AG04449 (cell line): ENCODE measurements at regions of chr15 and their contacts with region 1.

Region 1: GRCh38 chr15:42920519-42921227 is at the start of gene TTBK2:
- DNase-seq: peak; percentile 87
- H3K4me3 ChIP-seq: peak within 1 kb of the TSS; percentile 75
- CTCF ChIP-seq: peak; percentile 18

Region 2: GRCh38 chr15:42704492-42704926 is 216.2 kb before region 1 on chr15:
- CTCF ChIA-PET with region 1: interaction called, 147 read pairs
- POLR2A ChIA-PET with region 1: no interaction called
- DNase-seq: no peak
- H3K4me3 ChIP-seq: no peak overlapping the region
- CTCF ChIP-seq: peak; percentile 89

Region 3: GRCh38 chr15:42710662-42711061 is 210.0 kb before region 1 on chr15:
- CTCF ChIA-PET with region 1: interaction called, 147 read pairs
- POLR2A ChIA-PET with region 1: no interaction called
- DNase-seq: no peak
- H3K4me3 ChIP-seq: no peak overlapping the region
- CTCF ChIP-seq: no peak

Region 4: GRCh38 chr15:42727750-42728381 is 192.8 kb before region 1 on chr15:
- CTCF ChIA-PET with region 1: interaction called, 12 read pairs
- POLR2A ChIA-PET with region 1: no interaction called
- DNase-seq: no peak
- H3K4me3 ChIP-seq: no peak overlapping the region
- CTCF ChIP-seq: no peak

Region 5: GRCh38 chr15:42736793-42737528 is 183.7 kb before region 1 on chr15 and contains the start of gene CDAN1:
- CTCF ChIA-PET with region 1: interaction called, 27 read pairs
- POLR2A ChIA-PET with region 1: no interaction called
- DNase-seq: no peak
- H3K4me3 ChIP-seq: peak within 1 kb of the TSS; percentile 92
- CTCF ChIP-seq: no peak

Region 6: DNA sequence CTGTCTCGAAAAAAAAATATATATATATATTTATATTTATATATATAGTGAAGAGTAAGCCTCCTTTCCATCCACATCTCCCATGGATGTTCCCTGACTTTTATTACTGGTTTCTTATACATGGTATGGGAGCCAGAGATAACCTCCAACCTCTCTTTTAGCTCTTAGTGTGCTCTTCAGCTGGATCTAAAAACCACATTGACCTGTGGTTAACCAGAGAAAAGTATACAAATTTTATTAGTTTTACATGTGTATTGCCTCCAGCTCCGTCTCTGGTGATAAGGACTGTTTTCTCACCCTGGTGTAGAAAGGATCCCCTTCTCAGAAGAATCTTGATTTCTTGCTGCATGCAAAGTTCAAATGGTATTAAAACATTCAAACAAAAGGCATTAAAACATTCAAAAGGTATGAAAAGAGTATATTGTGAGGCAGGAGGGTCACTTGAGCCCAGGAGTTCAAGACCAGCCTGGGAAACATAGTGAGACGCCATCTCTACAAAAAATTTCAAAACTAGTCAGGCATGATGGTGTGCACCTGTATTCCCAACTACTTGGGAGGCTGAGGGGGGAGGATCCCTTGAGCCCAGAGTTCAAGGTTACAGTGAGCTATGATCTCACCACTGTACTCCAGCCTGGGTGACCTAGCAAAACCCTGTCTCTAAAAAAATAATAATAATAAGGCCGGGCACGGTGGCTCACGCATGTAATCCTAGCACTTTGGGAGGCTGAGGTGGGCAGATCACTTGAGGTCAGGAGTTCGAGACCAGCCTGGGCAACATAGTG is 13.4 kb after region 1 on chr15:
- CTCF ChIA-PET with region 1: interaction called, 10 read pairs
- POLR2A ChIA-PET with region 1: no interaction called
- DNase-seq: no peak
- H3K4me3 ChIP-seq: no peak overlapping the region
- CTCF ChIP-seq: no peak